ENCODE measurements at regions of chr1 and their contacts with region 1.

Region 1: GRCh38 chr1:115807723-115808122 is 33.2 kb downstream of the NHLH2 start:
- DNase-seq: peak in 3 of 5 donors; percentile 35 to 48 (median 36)
- ATAC-seq: peak in 3 of 4 donors; percentile 66 to 76 (median 70)
- H3K4me3 ChIP-seq: no peak overlapping the region
- H3K27ac ChIP-seq: no peak overlapping the region
- H3K4me1 ChIP-seq: peaks cover 0 to 9% (median 0%) of the 10 kb centered on the region in 12 donors
- H3K27me3 ChIP-seq: peaks cover 0 to 9% (median 0%) of the 10 kb centered on the region in 9 donors
- CTCF ChIP-seq: peak; percentile 55 to 77 (median 68)
- POLR2A ChIP-seq: no peak

Region 2: DNA sequence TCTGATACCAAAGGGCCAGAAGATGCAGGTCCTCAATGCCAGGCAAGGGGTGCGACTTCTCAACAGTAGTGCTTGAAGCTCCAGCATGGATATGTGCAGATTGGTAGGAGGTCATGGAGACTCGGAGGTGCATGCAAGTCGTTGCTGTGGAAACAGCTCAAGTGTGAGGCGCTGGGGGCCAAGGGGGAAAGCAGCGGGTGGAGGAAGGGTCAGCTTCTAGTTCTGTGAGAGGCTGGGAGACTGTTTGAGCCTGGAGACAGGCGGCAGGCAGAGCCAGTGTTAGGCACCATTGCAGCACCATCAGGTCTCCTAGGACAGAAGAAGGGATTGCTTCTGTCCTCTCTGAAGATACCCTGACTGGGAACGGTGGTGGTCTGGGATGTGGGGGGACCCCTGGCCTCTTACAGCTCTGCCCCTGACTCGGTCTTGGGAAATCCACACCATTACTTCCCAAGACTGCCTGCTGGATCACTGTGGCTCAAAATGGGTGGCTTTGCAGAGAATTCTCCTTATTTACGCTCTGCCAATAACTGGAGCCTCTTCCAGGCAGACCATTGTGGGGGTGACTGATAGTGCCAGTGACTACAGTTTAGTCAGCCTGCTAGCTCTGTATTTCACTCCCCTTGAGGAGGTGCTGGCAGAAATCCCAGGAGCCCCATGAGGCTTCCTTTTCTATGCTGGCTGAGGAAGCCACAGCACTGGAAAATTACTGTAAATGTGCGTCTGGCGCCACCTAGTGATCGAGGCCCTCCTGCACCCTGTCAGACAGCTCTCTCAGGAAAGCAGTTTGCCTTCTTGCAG is 212.2 kb before region 1 on chr1:
- intact Hi-C with region 1: no loop called
- DNase-seq: peak; percentile 87 to 92 (median 90)
- ATAC-seq: peak; percentile 81 to 92 (median 89)
- H3K4me3 ChIP-seq: no peak overlapping the region
- H3K27ac ChIP-seq: no peak overlapping the region
- H3K4me1 ChIP-seq: peaks cover 0 to 31% (median 12%) of the 10 kb centered on the region in 12 donors
- H3K27me3 ChIP-seq: no peaks in the 10 kb centered on the region
- CTCF ChIP-seq: peak in 11 of 12 donors; percentile 89 to 98 (median 95)
- POLR2A ChIP-seq: no peak

Region 3: DNA sequence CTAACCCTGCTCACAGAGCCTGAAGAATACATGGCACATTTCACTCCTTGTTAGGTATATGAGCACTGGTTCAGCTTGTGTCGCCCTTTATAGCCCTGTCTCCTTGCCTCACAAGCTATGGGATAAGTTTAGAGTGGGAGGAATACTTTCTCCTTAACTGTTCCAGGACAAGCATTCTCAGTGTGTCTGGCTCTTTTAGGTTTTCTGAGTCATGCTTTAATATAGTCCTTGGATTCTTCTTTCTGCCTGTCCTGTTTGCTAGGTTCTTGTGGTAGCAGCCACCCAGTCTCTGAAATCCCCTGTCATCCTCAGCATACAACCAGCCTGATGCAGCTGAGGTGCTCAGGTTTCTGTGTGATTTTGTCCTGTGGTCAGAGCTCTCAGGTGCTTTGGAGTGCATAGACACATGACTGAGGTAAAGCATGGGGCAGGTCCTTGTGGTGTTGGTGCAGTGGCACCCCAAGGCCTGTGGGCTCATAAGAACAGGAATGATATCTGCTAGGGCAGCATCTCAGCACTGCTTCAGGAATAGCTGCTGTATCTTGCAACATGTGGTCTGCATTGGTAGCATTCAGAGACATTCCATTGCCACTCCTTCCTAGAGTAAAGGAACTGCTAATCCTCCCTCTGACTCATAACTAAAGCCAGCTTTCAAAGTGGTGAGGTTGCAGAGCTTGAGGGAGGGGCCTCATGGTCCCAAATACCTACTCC is 25.0 kb before region 1 on chr1:
- intact Hi-C with region 1: no loop called
- DNase-seq: no peak
- ATAC-seq: peak; percentile 26 to 77 (median 67)
- H3K4me3 ChIP-seq: no peak overlapping the region
- H3K27ac ChIP-seq: no peak overlapping the region
- H3K4me1 ChIP-seq: peaks cover 0 to 8% (median 0%) of the 10 kb centered on the region in 12 donors
- H3K27me3 ChIP-seq: peaks cover 0 to 4% (median 0%) of the 10 kb centered on the region in 9 donors
- CTCF ChIP-seq: no peak
- POLR2A ChIP-seq: no peak

Region 4: DNA sequence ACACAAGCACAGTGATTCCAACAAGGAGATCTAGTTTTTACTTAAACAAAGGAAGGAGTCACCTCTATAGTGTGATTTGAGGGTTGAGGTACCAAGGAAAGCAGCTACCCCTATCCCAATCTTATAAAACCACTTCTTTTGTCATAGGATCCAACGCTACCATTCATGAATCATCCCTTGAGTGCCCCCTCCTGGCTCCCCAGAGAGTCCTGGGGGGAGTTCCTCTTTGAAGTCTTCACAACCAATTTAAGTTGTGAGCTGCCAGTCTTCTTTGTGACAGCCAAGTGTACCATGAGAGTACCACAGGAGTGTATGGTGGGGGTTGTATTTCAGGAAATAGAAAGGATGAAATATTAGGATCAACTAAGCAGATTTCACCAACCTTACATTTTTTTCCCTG is 72.3 kb after region 1 on chr1:
- intact Hi-C with region 1: loop called in 1 of 10 experiments (anchors 5 kb)
- DNase-seq: no peak
- ATAC-seq: no peak
- H3K4me3 ChIP-seq: no peak overlapping the region
- H3K27ac ChIP-seq: no peak overlapping the region
- H3K4me1 ChIP-seq: peaks cover 0 to 6% (median 0%) of the 10 kb centered on the region in 12 donors
- H3K27me3 ChIP-seq: peaks cover 0 to 13% (median 2%) of the 10 kb centered on the region in 9 donors
- CTCF ChIP-seq: no peak
- POLR2A ChIP-seq: no peak

Region 5: GRCh38 chr1:115976062-115976920 is 168.6 kb after region 1 on chr1 and contains the start of gene SLC22A15:
- intact Hi-C with region 1: loop called in 8 of 10 experiments (anchors 2 to 10 kb)
- DNase-seq: peak; percentile 57 to 88 (median 70)
- ATAC-seq: peak; percentile 47 to 90 (median 82)
- H3K4me3 ChIP-seq: peak within 1 kb of the TSS; percentile 60 to 86 (median 76)
- H3K27ac ChIP-seq: peak within 1 kb of the TSS; percentile 57 to 91 (median 78)
- H3K4me1 ChIP-seq: peaks cover 0 to 41% (median 6%) of the 10 kb centered on the region in 12 donors
- H3K27me3 ChIP-seq: no peaks in the 10 kb centered on the region
- CTCF ChIP-seq: no peak
- POLR2A ChIP-seq: no peak
- total RNA-seq, gene SLC22A15: 5.2 to 9.4 (median 8.1) TPM

Region 6: GRCh38 chr1:115980998-115981993 is 173.6 kb after region 1 on chr1:
- intact Hi-C with region 1: loop called in 8 of 10 experiments (anchors 2 to 10 kb)
- DNase-seq: peak in 1 of 5 donors; percentile 23
- ATAC-seq: peak in 3 of 4 donors; percentile 33 to 39 (median 38)
- H3K4me3 ChIP-seq: no peak overlapping the region
- H3K27ac ChIP-seq: no peak overlapping the region
- H3K4me1 ChIP-seq: peaks cover 0 to 60% (median 12%) of the 10 kb centered on the region in 12 donors
- H3K27me3 ChIP-seq: no peaks in the 10 kb centered on the region
- CTCF ChIP-seq: peak in 11 of 12 donors; percentile 23 to 60 (median 46)
- POLR2A ChIP-seq: no peak

Region 7: GRCh38 chr1:116020668-116021275 is 213.0 kb after region 1 on chr1:
- intact Hi-C with region 1: loop called (anchors 1 to 10 kb)
- DNase-seq: peak; percentile 30 to 61 (median 42)
- ATAC-seq: peak; percentile 40 to 75 (median 64)
- H3K4me3 ChIP-seq: no peak overlapping the region
- H3K27ac ChIP-seq: no peak overlapping the region
- H3K4me1 ChIP-seq: peaks cover 0 to 22% (median 0%) of the 10 kb centered on the region in 12 donors
- H3K27me3 ChIP-seq: no peaks in the 10 kb centered on the region
- CTCF ChIP-seq: peak; percentile 48 to 66 (median 58)
- POLR2A ChIP-seq: no peak

Region 8: DNA sequence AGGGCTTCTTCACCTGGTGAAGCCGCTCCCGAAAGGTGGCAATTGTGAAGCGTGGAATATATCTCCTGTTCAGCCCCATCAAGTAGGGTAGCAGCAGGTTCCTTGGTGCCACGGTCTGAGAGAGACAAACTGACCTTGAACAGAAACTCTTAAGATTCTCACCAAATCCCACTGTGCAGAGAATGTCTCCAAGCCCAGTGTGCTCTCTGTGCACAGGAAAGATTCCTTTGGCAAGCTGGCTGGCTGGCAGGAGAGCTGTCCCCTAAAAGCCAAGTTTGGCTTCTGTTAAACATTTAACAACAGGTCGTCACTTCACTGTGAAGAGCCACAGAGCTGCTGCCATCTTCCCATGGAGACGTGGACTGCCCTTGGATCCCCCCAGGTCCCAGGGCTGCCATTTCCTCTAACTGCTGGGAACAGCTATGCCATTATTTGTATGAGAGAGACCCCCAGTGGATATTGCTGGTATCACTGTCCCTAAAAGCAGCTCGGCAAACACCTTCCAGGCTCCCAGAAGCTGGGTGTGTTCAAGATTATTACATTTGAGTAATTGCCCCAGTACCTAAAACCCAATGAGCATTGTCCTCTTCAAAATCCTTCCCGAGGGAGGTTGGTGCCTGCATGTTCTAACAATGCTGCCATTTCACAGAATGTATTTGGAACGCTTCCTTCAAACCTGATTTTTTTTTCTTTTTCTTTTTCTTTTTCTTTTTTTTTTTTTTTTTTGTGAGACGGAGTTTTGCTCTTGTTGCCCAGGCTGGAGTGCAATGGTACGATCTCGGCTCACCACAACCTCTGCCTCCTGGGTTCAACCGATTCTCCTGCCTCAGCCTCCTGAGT is 691.3 kb after region 1 on chr1:
- intact Hi-C with region 1: loop called in 1 of 10 experiments (anchors 10 kb)
- DNase-seq: peak in 4 of 5 donors; percentile 52 to 70 (median 56)
- ATAC-seq: peak; percentile 60 to 75 (median 68)
- H3K4me3 ChIP-seq: no peak overlapping the region
- H3K27ac ChIP-seq: peak overlapping the region in 5 of 12 donors; percentile 2 to 35 (median 21)
- H3K4me1 ChIP-seq: peaks cover 0 to 69% (median 34%) of the 10 kb centered on the region in 12 donors
- H3K27me3 ChIP-seq: no peaks in the 10 kb centered on the region
- CTCF ChIP-seq: peak; percentile 66 to 86 (median 77)
- POLR2A ChIP-seq: no peak

Measured in heart left ventricle (tissue), 16 donors.